Calu3 (cell line): ENCODE measurements at regions of chr4 and their contacts with region 1.

Region 1: DNA sequence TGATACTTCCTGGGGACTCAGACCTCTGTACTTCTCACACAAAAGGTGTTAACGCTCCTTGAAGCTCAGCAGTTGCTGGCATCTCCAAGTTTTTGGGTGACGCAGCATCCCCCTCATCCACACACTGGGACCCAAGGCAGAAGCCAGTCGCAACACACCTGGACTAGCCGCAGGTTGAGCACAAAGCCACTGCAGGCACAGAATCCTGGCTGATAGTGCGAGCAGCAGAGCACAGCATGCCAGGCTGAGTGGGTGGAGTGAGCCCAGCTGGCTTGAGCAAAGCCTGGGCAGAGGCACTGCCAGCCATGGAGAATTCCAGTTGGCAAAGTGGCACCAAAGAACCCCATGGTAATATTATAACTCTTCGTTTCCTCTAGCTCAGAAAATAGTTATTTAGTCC is 873.2 kb upstream of the NDST4 start:
- DNase-seq: no peak
- H3K4me3 Mint-ChIP-seq: no peak overlapping the region
- H3K27ac Mint-ChIP-seq: no peak overlapping the region
- H3K4me1 Mint-ChIP-seq: no peaks in the 10 kb centered on the region
- H3K27me3 Mint-ChIP-seq: no peaks in the 10 kb centered on the region
- CTCF ChIP-seq: no peak

Region 2: GRCh38 chr4:116668190-116668589 is 681.6 kb after region 1 on chr4:
- CTCF ChIA-PET with region 1: no interaction called
- intact Hi-C with region 1: loop called (anchors 5 kb)
- DNase-seq: no peak
- H3K4me3 Mint-ChIP-seq: no peak overlapping the region
- H3K27ac Mint-ChIP-seq: no peak overlapping the region
- H3K4me1 Mint-ChIP-seq: no peaks in the 10 kb centered on the region
- H3K27me3 Mint-ChIP-seq: no peaks in the 10 kb centered on the region
- CTCF ChIP-seq: no peak